ENCODE measurements at regions of chr9 and their contacts with region 1.

Region 1: GRCh38 chr9:129036241-129036922 is at the start of gene MIGA2:
- DNase-seq: peak; percentile 98
- H3K4me3 ChIP-seq: peak within 1 kb of the TSS; percentile 86
- H3K27ac ChIP-seq: peak within 1 kb of the TSS; percentile 32; the same call in 1 of the 2 replicates
- H3K4me1 ChIP-seq: peaks cover 19% of the 10 kb centered on the region
- H3K27me3 ChIP-seq: no peaks in the 10 kb centered on the region
- CTCF ChIP-seq: no peak
- total RNA-seq, gene MIGA2: 40.7 and 48.2 TPM in 2 replicates

Region 2: GRCh38 chr9:128972956-128973355 is 63.4 kb before region 1 on chr9:
- CTCF ChIA-PET with region 1: no interaction called
- POLR2A ChIA-PET with region 1: no interaction called
- intact Hi-C with region 1: no loop called
- DNase-seq: peak in 1 of 2 experiments; percentile 8
- H3K4me3 ChIP-seq: no peak overlapping the region
- H3K27ac ChIP-seq: 0 out of 2 replicates have a peak overlapping the region, but pooled peaks have one; percentile 18
- H3K4me1 ChIP-seq: no peaks in the 10 kb centered on the region
- H3K27me3 ChIP-seq: no peaks in the 10 kb centered on the region
- CTCF ChIP-seq: no peak

Region 3: GRCh38 chr9:129023036-129023907 is 13.1 kb before region 1 on chr9:
- CTCF ChIA-PET with region 1: interaction called, 3 read pairs
- POLR2A ChIA-PET with region 1: interaction called, 10 read pairs
- intact Hi-C with region 1: no loop called
- DNase-seq: peak; percentile 85 to 92
- H3K4me3 ChIP-seq: no peak overlapping the region
- H3K27ac ChIP-seq: peak overlapping the region; percentile 51
- H3K4me1 ChIP-seq: peaks cover 51% of the 10 kb centered on the region
- H3K27me3 ChIP-seq: no peaks in the 10 kb centered on the region
- CTCF ChIP-seq: no peak

Region 4: DNA sequence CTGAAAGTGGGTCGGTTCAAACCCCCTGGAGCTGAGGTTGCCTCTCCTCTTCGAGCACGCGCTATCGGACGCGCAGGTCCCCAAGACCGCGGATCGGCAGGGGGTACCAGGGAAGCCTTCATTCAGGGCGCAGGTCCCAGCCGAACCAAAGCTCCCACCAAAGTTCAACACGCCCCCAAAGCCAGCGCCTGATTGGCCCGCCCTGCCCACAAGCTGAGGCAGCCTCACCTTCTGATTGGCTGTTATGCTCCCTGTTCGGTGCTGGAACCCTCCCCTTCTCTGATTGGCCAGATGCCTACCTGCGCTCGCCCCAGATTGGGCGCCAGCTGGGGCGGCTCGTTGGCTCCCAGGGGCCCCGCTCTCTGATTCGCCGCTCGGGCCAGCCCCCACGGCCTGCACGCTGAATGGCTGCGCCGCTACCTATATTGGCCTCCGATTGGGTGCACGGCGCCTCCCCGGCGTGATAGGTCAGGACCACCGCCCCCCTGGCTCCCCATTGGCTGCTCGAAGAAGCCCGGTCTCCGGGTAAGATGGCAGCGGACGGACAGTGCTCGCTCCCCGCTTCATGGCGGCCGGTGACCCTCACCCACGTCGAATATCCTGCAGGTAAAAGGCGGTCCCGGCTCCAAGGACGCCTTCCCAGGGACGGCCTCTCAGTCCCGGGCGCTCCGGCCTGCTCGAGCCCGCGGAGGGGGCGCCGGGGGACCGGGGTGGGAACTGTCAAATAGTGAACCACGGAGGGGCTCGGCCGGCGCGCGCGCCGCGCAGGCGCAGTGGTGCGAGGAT is 44.4 kb after region 1 on chr9 and contains the start of gene DOLPP1:
- CTCF ChIA-PET with region 1: no interaction called
- POLR2A ChIA-PET with region 1: no interaction called
- intact Hi-C with region 1: loop called (anchors 1 kb)
- DNase-seq: peak; percentile 99 to 100
- H3K4me3 ChIP-seq: peak within 1 kb of the TSS; percentile 73
- H3K27ac ChIP-seq: no peak within 1 kb of the TSS
- H3K4me1 ChIP-seq: peaks cover 27% of the 10 kb centered on the region
- H3K27me3 ChIP-seq: no peaks in the 10 kb centered on the region
- CTCF ChIP-seq: no peak
- total RNA-seq, gene DOLPP1: 21.5 and 24.4 TPM in 2 replicates

Measured in PC-9 (cell line).